Common myeloid progenitor, CD34-positive (primary cell): ENCODE measurements at regions of chr9 and their contacts with region 1.

Region 1: DNA sequence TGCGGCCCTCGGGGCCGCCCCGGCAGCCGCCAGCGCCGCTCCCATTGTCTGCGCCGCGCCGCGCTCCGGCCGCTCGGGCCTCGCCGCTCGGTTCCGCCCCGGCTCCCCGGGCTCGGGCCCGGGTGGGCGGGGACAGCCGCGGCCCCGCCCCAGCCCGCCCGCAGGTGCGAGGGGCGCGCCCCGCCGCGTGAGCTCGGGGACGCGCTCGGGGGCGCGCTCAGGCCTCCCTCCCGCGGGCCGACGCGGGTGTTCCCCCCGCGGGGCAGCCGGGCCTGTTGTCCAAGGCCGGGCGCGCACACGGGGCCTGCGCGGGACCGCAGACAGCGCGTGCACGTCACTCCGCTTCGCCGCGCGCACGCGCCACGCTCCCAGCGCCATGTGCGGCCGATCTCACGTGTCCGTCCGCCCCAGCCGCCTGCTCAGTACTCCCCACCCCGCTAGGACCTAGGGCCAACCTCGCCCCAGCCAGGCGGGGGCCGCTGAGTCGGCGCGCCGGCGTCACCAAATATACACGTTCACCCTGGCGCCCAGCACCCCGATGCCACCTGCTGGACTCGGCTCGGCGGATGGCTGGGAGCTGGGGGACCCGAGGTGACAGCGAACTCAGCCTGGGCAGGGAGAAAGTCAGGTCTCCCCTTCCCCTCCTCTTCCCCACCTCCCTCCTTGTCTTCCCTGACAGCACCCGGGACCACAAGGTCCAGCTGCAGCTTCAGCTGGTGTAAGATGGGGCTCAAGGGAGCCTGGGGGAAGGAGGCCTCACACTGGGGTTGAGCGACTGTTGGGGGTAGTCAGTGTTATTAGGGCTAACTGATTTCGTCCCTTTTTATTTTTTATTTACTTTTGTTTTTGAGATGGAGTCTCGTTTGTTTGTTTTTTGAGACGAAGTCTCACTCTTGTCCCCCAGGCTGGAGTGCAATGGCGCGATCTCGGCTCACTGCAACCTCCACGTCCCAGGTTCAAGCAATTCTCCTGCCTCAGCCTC is 14.3 kb downstream of the GBGT1 start:
- DNase-seq: peak; percentile 92 to 96 (median 93)
- H3K4me3 ChIP-seq: peak overlapping the region; percentile 35 to 95 (median 85)
- H3K27ac ChIP-seq: peak overlapping the region in 1 of 2 experiments; percentile 87
- H3K4me1 ChIP-seq: peaks cover 3 to 44% (median 40%) of the 10 kb centered on the region in 4 experiments
- H3K27me3 ChIP-seq: no peaks in the 10 kb centered on the region

Region 2: DNA sequence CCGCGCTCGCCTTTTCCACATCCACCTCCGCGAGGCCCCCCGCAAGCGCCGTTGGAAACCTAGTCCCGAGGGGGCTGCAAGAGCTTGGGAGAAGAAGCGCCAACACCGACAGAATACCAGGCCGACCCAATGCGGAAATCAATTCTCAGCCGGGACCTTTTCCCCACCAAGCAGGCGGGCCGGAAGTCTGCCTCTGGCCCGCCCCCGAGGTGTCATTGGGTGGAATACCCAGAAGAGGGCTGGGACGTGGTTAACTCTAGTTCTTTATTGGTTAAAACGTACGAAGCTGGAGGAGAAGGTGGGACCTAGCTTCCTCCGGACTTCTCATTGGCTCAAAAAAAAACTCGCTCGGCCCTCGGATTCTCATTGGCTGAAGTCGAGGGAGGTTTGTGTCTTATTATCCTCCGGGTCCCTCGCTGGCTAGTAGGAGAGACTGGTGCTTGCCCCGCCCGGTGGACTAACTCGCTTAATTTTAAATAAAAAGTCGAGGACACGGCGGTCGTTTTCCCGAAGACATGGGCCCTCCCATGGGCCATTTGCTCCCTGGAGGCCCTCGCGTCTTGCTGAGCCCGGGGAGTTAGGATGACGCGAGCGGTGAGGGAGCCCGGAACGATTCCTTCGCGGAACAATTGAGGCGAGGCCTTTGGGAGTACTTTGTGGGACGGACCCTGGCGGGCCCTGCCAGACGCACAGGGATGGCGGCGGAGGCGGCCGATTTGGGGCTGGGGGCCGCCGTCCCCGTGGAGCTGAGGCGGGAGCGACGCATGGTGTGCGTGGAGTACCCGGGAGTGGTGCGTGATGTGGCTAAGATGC is 118.9 kb before region 1 on chr9 and contains the start of gene GTF3C5:
- CTCF ChIA-PET with region 1: interaction called, 11 read pairs
- POLR2A ChIA-PET with region 1: interaction called, 3 read pairs
- DNase-seq: peak; percentile 99
- H3K4me3 ChIP-seq: peak within 1 kb of the TSS; percentile 91 to 100 (median 92)
- H3K27ac ChIP-seq: peak within 1 kb of the TSS; percentile 83 to 93
- H3K4me1 ChIP-seq: peaks cover 5 to 37% (median 30%) of the 10 kb centered on the region in 4 experiments
- H3K27me3 ChIP-seq: no peaks in the 10 kb centered on the region

Region 3: DNA sequence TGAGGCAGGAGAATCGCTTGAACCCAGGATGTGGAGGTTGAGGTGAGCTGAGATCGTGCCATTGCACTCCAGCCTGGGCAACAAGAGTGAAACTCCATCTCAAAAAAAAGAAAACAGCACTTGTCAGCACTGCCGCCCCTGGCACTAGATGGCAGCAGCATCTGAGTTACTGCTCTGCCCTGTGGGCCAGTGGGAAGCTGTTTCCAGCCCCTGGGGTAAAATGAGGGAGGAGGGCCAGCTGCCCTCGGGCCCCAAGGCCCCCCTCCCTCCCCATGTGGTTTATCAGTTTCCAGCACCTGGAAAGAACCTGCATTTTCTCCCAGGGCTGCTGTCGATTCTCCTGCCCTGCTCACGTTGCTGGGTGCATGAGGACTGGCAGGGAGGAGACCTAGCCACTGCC is 100.8 kb before region 1 on chr9:
- CTCF ChIA-PET with region 1: interaction called, 11 read pairs
- POLR2A ChIA-PET with region 1: no interaction called
- DNase-seq: peak; percentile 57 to 77 (median 76)
- H3K4me3 ChIP-seq: no peak overlapping the region
- H3K27ac ChIP-seq: no peak overlapping the region
- H3K4me1 ChIP-seq: peaks cover 0 to 4% (median 2%) of the 10 kb centered on the region in 4 experiments
- H3K27me3 ChIP-seq: no peaks in the 10 kb centered on the region

Region 4: GRCh38 chr9:133075925-133076630 is 73.3 kb before region 1 on chr9:
- CTCF ChIA-PET with region 1: interaction called, 15 read pairs
- POLR2A ChIA-PET with region 1: no interaction called
- DNase-seq: no peak
- H3K4me3 ChIP-seq: no peak overlapping the region
- H3K27ac ChIP-seq: no peak overlapping the region
- H3K4me1 ChIP-seq: peaks cover 2 to 23% (median 13%) of the 10 kb centered on the region in 4 experiments
- H3K27me3 ChIP-seq: no peaks in the 10 kb centered on the region

Region 5: DNA sequence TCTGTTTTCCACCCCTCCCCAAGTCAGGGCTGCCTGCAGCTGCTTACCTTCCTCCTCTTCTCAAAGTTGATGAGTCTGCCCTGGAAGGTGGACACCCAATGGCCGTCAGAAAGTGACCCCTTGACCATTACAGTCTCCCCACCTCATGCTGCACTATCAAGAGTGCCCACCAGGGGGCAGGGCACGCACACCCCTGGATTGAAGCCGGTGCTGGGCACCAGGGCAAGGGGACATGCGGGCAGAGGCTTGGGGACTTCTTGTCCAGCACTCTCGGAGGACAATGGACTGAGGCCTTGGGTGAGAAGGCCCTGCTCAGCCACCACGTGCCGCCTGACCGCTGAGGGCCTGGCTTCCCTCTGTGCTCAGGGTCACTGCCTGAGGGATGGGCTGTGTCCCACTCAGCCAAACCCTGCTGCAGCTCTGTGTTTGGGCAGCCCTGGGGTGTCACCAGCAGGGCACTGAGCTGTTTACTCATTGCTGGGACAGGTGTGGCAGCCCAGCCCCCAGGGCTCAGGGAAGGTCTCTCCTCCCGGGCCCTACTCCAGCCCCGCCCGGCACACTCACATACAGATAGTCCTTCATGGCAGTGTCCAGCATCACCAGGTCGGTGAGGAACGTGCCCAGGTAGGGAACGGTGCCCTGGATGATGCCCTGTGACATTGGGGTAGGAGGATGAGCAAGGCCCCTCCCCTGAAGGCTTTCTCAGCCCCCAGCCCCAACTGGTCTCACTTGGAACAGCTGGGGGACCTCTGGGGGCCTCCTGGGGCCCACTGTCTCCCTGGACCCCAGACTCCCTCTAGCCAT is 46.0 kb before region 1 on chr9:
- CTCF ChIA-PET with region 1: interaction called, 445 read pairs
- POLR2A ChIA-PET with region 1: interaction called, 19 read pairs
- DNase-seq: peak in 1 of 3 donors; percentile 40
- H3K4me3 ChIP-seq: no peak overlapping the region
- H3K27ac ChIP-seq: no peak overlapping the region
- H3K4me1 ChIP-seq: no peaks in the 10 kb centered on the region
- H3K27me3 ChIP-seq: no peaks in the 10 kb centered on the region

Region 6: DNA sequence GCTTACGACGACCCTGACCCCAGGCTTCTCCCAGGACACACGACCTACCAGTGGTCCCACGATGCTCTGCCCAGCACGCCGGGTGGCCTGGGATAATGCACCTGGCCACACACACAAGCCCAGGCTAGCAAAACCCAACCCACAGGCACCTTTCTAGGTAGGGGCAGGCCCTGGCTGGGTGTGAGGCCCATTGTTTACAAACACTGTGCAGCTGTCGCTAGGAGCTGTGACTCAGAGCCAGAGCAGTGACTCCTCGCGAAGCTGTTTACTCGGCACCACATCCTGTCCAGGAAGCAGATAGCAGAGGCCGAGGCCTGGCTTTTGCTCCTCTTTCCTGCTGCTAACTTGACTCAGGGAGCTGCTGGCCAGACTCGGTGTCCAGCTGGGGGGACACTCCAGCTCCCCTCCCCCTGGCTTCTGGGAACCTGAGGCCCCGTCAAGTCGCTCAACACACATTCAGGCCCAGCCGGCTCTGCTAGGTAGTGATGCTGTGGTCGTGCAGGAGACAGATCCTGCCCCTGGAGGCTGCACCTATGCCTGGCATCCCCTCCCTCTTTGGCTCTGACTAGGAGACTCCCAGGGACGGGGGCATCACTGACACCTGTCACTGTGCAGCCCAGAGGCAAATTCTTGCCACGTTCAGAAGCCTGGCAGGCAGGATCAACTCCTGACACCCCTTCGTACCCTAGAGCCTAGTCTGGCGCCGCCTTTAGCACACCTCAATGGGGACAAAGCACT is 15.6 kb before region 1 on chr9:
- CTCF ChIA-PET with region 1: interaction called, 71 read pairs
- POLR2A ChIA-PET with region 1: interaction called, 36 read pairs
- DNase-seq: peak; percentile 96 to 98 (median 97)
- H3K4me3 ChIP-seq: peak overlapping the region in 2 of 7 experiments; percentile 25 to 42
- H3K27ac ChIP-seq: peak overlapping the region; percentile 97 to 98
- H3K4me1 ChIP-seq: peaks cover 3 to 72% (median 59%) of the 10 kb centered on the region in 4 experiments
- H3K27me3 ChIP-seq: no peaks in the 10 kb centered on the region

Region 7: DNA sequence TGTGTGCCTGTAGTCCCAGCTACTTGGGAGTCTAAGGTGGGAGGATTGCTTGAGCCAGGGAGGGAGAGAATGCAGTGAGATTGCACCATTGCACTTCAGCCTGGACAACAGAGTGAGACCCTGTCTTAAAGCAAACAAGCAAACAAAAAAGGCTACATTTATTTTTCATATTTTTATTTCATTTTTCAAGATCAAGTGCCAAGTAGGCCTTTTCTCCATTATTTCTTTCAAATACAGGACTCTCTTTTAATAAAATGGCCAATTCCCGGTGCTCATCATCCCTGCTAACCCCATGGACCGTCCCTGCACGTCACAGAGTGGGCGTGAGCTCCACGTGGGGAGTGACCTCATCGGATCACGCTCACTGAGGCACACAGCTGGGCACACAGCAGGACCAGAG is 23.6 kb after region 1 on chr9:
- CTCF ChIA-PET with region 1: no interaction called
- POLR2A ChIA-PET with region 1: no interaction called
- DNase-seq: no peak
- H3K4me3 ChIP-seq: no peak overlapping the region
- H3K27ac ChIP-seq: no peak overlapping the region
- H3K4me1 ChIP-seq: no peaks in the 10 kb centered on the region
- H3K27me3 ChIP-seq: peaks cover 0 to 1% (median 0%) of the 10 kb centered on the region in 5 experiments